ENCODE measurements at regions of chr10 and their contacts with region 1.

Region 1: GRCh38 chr10:102352066-102352715 is 43.3 kb upstream of the NFKB2 start:
- DNase-seq: peak; percentile 72
- H3K4me3 Mint-ChIP-seq: no peak overlapping the region
- H3K27ac Mint-ChIP-seq: no peak overlapping the region
- H3K4me1 Mint-ChIP-seq: peaks cover 4% of the 10 kb centered on the region
- H3K27me3 Mint-ChIP-seq: no peaks in the 10 kb centered on the region
- CTCF ChIP-seq: peak; percentile 83

Region 2: GRCh38 chr10:102167861-102168260 is 184.3 kb before region 1 on chr10:
- CTCF ChIA-PET with region 1: interaction called, 72 read pairs
- POLR2A ChIA-PET with region 1: interaction called, 3 read pairs
- intact Hi-C with region 1: loop called (anchors 2 kb)
- DNase-seq: no peak
- H3K4me3 Mint-ChIP-seq: no peak overlapping the region
- H3K27ac Mint-ChIP-seq: no peak overlapping the region
- H3K4me1 Mint-ChIP-seq: peaks cover 5% of the 10 kb centered on the region
- H3K27me3 Mint-ChIP-seq: peaks cover 11% of the 10 kb centered on the region
- CTCF ChIP-seq: no peak

Region 3: GRCh38 chr10:102220612-102221011 is 131.6 kb before region 1 on chr10:
- CTCF ChIA-PET with region 1: interaction called, 354 read pairs
- POLR2A ChIA-PET with region 1: no interaction called
- intact Hi-C with region 1: no loop called
- DNase-seq: peak; percentile 21
- H3K4me3 Mint-ChIP-seq: no peak overlapping the region
- H3K27ac Mint-ChIP-seq: no peak overlapping the region
- H3K4me1 Mint-ChIP-seq: peaks cover 2% of the 10 kb centered on the region
- H3K27me3 Mint-ChIP-seq: peaks cover 25% of the 10 kb centered on the region
- CTCF ChIP-seq: no peak

Region 4: GRCh38 chr10:102245101-102245931 is 106.9 kb before region 1 on chr10 and contains the start of gene GBF1:
- CTCF ChIA-PET with region 1: interaction called, 53 read pairs
- POLR2A ChIA-PET with region 1: interaction called, 5 read pairs
- intact Hi-C with region 1: loop called (anchors 5 kb)
- DNase-seq: peak; percentile 100
- H3K4me3 Mint-ChIP-seq: peak within 1 kb of the TSS; percentile 99
- H3K27ac Mint-ChIP-seq: peak within 1 kb of the TSS; percentile 97
- H3K4me1 Mint-ChIP-seq: peaks cover 45% of the 10 kb centered on the region
- H3K27me3 Mint-ChIP-seq: no peaks in the 10 kb centered on the region
- CTCF ChIP-seq: no peak
- total RNA-seq, gene GBF1: 50.0 and 50.6 TPM in 2 replicates

Region 5: DNA sequence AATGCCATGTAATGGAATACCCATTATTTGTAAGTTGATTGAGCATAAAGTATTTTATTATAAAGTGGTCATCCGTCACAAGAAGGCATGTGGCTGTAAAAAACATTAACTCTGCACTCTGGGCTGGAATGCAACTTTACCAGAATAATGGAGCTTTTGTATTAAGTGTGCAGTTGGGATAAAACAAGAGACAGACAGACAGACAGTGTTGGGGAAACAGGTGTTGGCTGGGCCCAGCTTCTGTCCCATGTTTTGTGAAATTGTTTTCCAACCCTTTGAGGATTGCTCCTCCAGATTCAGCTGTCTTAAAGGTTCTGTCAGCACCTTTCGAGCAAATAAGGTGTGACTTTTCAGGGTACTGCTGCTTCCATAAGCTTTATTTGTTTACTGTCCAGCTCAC is 24.6 kb before region 1 on chr10:
- CTCF ChIA-PET with region 1: interaction called, 13 read pairs
- POLR2A ChIA-PET with region 1: no interaction called
- intact Hi-C with region 1: no loop called
- DNase-seq: no peak
- H3K4me3 Mint-ChIP-seq: no peak overlapping the region
- H3K27ac Mint-ChIP-seq: no peak overlapping the region
- H3K4me1 Mint-ChIP-seq: peaks cover 12% of the 10 kb centered on the region
- H3K27me3 Mint-ChIP-seq: no peaks in the 10 kb centered on the region
- CTCF ChIP-seq: no peak

Region 6: GRCh38 chr10:102335184-102335583 is 17.0 kb before region 1 on chr10:
- CTCF ChIA-PET with region 1: interaction called, 13 read pairs
- POLR2A ChIA-PET with region 1: no interaction called
- intact Hi-C with region 1: no loop called
- DNase-seq: peak; percentile 72
- H3K4me3 Mint-ChIP-seq: no peak overlapping the region
- H3K27ac Mint-ChIP-seq: peak overlapping the region; percentile 86
- H3K4me1 Mint-ChIP-seq: peaks cover 7% of the 10 kb centered on the region
- H3K27me3 Mint-ChIP-seq: no peaks in the 10 kb centered on the region
- CTCF ChIP-seq: no peak

Region 7: GRCh38 chr10:102368072-102368471 is 15.9 kb after region 1 on chr10:
- CTCF ChIA-PET with region 1: interaction called, 79 read pairs
- POLR2A ChIA-PET with region 1: interaction called, 3 read pairs
- intact Hi-C with region 1: no loop called
- DNase-seq: no peak
- H3K4me3 Mint-ChIP-seq: no peak overlapping the region
- H3K27ac Mint-ChIP-seq: peak overlapping the region; percentile 67
- H3K4me1 Mint-ChIP-seq: peaks cover 23% of the 10 kb centered on the region
- H3K27me3 Mint-ChIP-seq: no peaks in the 10 kb centered on the region
- CTCF ChIP-seq: no peak

Region 8: GRCh38 chr10:102511583-102512274 is 159.5 kb after region 1 on chr10:
- CTCF ChIA-PET with region 1: no interaction called
- POLR2A ChIA-PET with region 1: no interaction called
- intact Hi-C with region 1: no loop called
- DNase-seq: no peak
- H3K4me3 Mint-ChIP-seq: no peak overlapping the region
- H3K27ac Mint-ChIP-seq: no peak overlapping the region
- H3K4me1 Mint-ChIP-seq: no peaks in the 10 kb centered on the region
- H3K27me3 Mint-ChIP-seq: no peaks in the 10 kb centered on the region
- CTCF ChIP-seq: no peak